Activated CD8-positive, alpha-beta T cell treated with anti-CD3 and anti-CD28 coated beads for 36 hours (primary cell): ENCODE measurements at regions of chr1 and their contacts with region 1.

Region 1: GRCh38 chr1:206846487-206846886 is 18.9 kb upstream of the IL20 start:
- DNase-seq: no peak
- ATAC-seq: no peak
- H3K4me3 Mint-ChIP-seq: no peak overlapping the region
- H3K27ac Mint-ChIP-seq: no peak overlapping the region
- H3K4me1 Mint-ChIP-seq: no peaks in the 10 kb centered on the region
- H3K27me3 Mint-ChIP-seq: no peaks in the 10 kb centered on the region
- CTCF ChIP-seq: no peak

Region 2: DNA sequence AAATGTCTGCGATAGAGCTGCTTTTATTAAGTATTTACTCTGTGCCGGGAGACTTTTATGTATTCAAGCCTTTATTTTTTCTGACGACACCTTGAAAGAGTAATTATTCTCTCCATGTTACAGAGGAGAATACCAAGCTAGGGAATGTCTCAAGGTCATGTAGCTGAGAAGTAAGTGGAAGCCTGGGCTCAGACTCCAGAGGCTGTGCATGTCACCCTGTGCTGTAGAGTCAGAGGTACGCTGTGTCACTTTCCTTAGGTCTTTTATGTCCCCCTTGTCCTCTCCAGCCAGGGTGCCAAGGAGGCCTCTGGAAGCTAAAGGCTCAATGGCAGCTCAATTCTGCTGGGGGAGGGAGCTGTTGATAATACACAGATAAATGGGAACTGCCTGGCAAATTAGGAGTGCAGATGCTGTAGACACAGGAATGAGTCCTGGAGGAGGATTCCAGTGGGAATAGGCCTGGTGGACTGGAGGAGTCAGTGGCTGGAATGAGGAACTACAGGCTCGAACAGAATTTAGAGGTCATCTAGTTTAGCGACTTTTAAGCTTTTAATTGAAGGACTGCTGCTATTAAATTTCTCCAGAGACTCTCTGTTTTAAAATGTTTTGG is 85.2 kb before region 1 on chr1:
- CTCF ChIA-PET with region 1: no interaction called
- POLR2A ChIA-PET with region 1: no interaction called
- intact Hi-C with region 1: no loop called
- DNase-seq: no peak
- ATAC-seq: no peak
- H3K4me3 Mint-ChIP-seq: no peak overlapping the region
- H3K27ac Mint-ChIP-seq: peak overlapping the region; percentile 19
- H3K4me1 Mint-ChIP-seq: peaks cover 28% of the 10 kb centered on the region
- H3K27me3 Mint-ChIP-seq: no peaks in the 10 kb centered on the region
- CTCF ChIP-seq: no peak

Region 3: DNA sequence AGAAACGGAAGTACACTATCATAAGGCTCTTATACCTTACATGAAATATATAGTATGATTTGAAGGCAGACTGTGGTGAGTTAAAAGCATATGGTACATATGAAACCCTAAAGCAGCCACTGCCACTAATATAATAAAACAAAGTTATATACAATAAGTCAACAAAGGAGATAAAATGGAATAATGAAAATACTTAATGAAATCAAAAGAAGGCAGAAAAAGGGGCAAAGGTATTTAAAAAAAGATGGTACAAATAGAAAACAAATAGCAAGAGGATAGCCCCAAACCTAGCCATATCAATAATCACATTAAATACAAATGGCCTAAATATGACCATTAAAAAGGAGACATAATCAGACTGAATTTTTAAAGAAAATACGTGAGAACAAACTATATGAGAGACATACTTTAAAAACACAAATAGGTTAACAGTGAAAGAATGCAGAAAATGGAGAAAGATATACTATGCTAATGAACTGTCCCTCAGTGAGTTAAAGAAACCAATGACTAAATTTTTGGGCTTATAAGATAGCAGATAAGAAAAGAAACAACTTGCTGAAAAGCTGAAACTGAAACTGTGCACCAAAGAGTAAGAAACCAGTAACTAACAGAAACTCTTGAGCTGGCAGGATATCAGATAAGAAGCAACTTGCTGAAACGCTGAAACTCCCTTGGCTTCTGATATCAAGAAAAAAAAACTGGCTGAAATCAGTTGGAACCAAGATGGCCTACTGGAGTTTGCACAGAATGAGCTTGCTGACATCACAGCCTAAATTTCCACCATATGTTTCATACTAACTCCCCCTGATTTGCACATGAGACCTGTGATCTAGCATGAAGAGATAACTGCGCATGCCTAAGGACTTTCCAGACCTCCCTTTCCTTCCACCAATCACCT is 29.8 kb before region 1 on chr1:
- CTCF ChIA-PET with region 1: no interaction called
- POLR2A ChIA-PET with region 1: no interaction called
- intact Hi-C with region 1: no loop called
- DNase-seq: peak; percentile 53
- ATAC-seq: peak; percentile 93
- H3K4me3 Mint-ChIP-seq: peak overlapping the region; percentile 9
- H3K27ac Mint-ChIP-seq: peak overlapping the region; percentile 87
- H3K4me1 Mint-ChIP-seq: peaks cover 24% of the 10 kb centered on the region
- H3K27me3 Mint-ChIP-seq: no peaks in the 10 kb centered on the region
- CTCF ChIP-seq: no peak

Region 4: GRCh38 chr1:206856674-206857464 is 10.4 kb after region 1 on chr1:
- CTCF ChIA-PET with region 1: interaction called, 48 read pairs
- POLR2A ChIA-PET with region 1: no interaction called
- intact Hi-C with region 1: no loop called
- DNase-seq: peak; percentile 30
- ATAC-seq: peak; percentile 72
- H3K4me3 Mint-ChIP-seq: no peak overlapping the region
- H3K27ac Mint-ChIP-seq: no peak overlapping the region
- H3K4me1 Mint-ChIP-seq: peaks cover 11% of the 10 kb centered on the region
- H3K27me3 Mint-ChIP-seq: no peaks in the 10 kb centered on the region
- CTCF ChIP-seq: peak; percentile 58

Region 5: GRCh38 chr1:207084701-207085180 is 238.3 kb after region 1 on chr1:
- CTCF ChIA-PET with region 1: no interaction called
- POLR2A ChIA-PET with region 1: no interaction called
- intact Hi-C with region 1: no loop called
- DNase-seq: peak; percentile 73
- ATAC-seq: peak; percentile 83
- H3K4me3 Mint-ChIP-seq: no peak overlapping the region
- H3K27ac Mint-ChIP-seq: no peak overlapping the region
- H3K4me1 Mint-ChIP-seq: peaks cover 25% of the 10 kb centered on the region
- H3K27me3 Mint-ChIP-seq: peaks cover 2% of the 10 kb centered on the region
- CTCF ChIP-seq: peak; percentile 70